ENCODE measurements at regions of chrX and their contacts with region 1.

Region 1: DNA sequence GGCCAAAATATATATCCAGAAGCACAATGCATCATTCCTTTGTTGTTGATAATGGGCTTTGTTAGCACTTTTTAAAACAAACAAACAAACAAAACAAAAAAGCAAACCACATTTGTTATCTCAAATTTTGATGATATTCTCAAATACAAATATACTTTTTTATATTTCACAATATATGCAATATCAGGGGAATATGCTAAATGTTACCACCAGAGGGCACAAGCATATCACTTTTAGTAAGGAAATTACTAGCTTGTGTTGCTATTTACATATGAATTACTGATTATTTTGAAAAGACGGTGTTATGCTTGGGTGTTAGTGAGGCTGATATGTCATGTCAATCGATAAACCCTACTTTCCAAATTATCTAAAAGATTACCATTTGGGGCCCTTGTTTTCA is 29.1 kb downstream of the RIPPLY1 start:
- DNase-seq: no peak
- ATAC-seq: no peak
- H3K4me3 Mint-ChIP-seq: no peak overlapping the region
- H3K27ac Mint-ChIP-seq: no peak overlapping the region
- H3K4me1 Mint-ChIP-seq: peaks cover 3% of the 10 kb centered on the region
- H3K27me3 Mint-ChIP-seq: no peaks in the 10 kb centered on the region
- CTCF ChIP-seq: peak; percentile 29; the same call in 1 of the 2 replicates

Region 2: GRCh38 chrX:106791495-106791894 is 82.6 kb before region 1 on chrX:
- CTCF ChIA-PET with region 1: no interaction called
- POLR2A ChIA-PET with region 1: no interaction called
- DNase-seq: no peak
- ATAC-seq: no peak
- H3K4me3 Mint-ChIP-seq: no peak overlapping the region
- H3K27ac Mint-ChIP-seq: no peak overlapping the region
- H3K4me1 Mint-ChIP-seq: no peaks in the 10 kb centered on the region
- H3K27me3 Mint-ChIP-seq: no peaks in the 10 kb centered on the region
- CTCF ChIP-seq: no peak

Region 3: GRCh38 chrX:106862972-106863688 is 10.9 kb before region 1 on chrX:
- CTCF ChIA-PET with region 1: interaction called, 16 read pairs
- POLR2A ChIA-PET with region 1: no interaction called
- DNase-seq: peak; percentile 47
- ATAC-seq: peak; percentile 97
- H3K4me3 Mint-ChIP-seq: no peak overlapping the region
- H3K27ac Mint-ChIP-seq: no peak overlapping the region
- H3K4me1 Mint-ChIP-seq: peaks cover 3% of the 10 kb centered on the region; the same call in 1 of the 2 replicates
- H3K27me3 Mint-ChIP-seq: peaks cover 3% of the 10 kb centered on the region; the same call in 1 of the 2 replicates
- CTCF ChIP-seq: peak; percentile 32

Region 4: GRCh38 chrX:106959901-106960300 is 85.8 kb after region 1 on chrX:
- CTCF ChIA-PET with region 1: interaction called, 13 read pairs
- POLR2A ChIA-PET with region 1: no interaction called
- DNase-seq: no peak
- ATAC-seq: peak; percentile 89
- H3K4me3 Mint-ChIP-seq: no peak overlapping the region
- H3K27ac Mint-ChIP-seq: no peak overlapping the region
- H3K4me1 Mint-ChIP-seq: no peaks in the 10 kb centered on the region
- H3K27me3 Mint-ChIP-seq: no peaks in the 10 kb centered on the region
- CTCF ChIP-seq: no peak